Dendritic cell treated with granulocyte-macrophage colony-stimulating factor and Interleukin-4, amounts not matched to agents 40 ng/mL and 50 ng/mL, for 4 days (primary cell): ENCODE measurements at regions of chr12 and their contacts with region 1.

Region 1: GRCh38 chr12:26340649-26341048 is 145.3 kb downstream of the SSPN start:
- H3K4me3 Mint-ChIP-seq: no peak overlapping the region
- H3K27ac Mint-ChIP-seq: no peak overlapping the region
- H3K4me1 Mint-ChIP-seq: peaks cover 51% of the 10 kb centered on the region
- H3K27me3 Mint-ChIP-seq: peaks cover 38% of the 10 kb centered on the region

Region 2: GRCh38 chr12:26130728-26131127 is 209.9 kb before region 1 on chr12:
- intact Hi-C with region 1: loop called (anchors 5 kb)
- H3K4me3 Mint-ChIP-seq: no peak overlapping the region
- H3K27ac Mint-ChIP-seq: no peak overlapping the region
- H3K4me1 Mint-ChIP-seq: peaks cover 50% of the 10 kb centered on the region
- H3K27me3 Mint-ChIP-seq: peaks cover 73% of the 10 kb centered on the region

Region 3: DNA sequence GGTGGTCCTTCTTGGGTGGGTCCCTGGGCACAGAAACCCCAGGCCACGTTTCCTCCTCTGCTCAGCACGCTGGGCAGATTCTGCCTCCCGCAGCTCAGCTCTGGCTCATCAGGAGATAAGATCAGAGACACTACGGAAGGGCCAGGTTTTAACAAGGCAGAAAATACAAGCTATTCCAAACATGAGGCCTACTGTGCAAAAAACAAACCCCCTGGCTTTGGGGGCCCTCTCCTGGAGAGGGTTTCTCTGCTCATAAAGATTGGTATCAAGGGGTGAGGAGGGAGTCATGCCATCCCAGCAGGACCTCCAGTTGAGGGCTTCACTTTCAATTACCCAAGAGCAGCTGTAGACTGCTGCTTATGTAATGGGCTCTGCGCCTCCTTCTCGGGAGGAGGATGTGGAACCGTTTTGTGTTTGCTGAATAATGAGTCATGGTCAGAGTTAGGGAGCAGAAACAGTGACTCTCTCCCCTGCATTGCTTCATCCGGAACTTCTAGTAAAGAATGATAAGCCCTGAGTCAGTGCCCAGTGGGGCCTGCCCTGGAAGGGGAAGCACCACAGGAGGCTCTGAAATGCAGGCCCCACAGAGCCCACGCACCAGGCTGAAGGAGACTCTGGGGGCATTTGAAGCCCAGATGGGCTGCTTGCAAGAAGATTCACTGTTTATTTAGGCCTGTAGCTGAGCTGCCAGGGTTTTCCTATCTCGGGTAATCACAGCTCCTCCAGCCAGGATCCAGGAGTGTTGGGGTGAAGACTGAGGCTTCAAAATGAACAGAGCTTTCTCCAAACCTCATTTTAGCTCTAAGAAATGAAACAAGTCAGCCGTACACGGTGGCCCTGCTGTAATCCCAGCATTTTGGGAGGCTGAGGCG is 66.0 kb before region 1 on chr12:
- intact Hi-C with region 1: loop called (anchors 2 kb)
- H3K4me3 Mint-ChIP-seq: no peak overlapping the region
- H3K27ac Mint-ChIP-seq: peak overlapping the region; percentile 86
- H3K4me1 Mint-ChIP-seq: peaks cover 73% of the 10 kb centered on the region
- H3K27me3 Mint-ChIP-seq: peaks cover 39% of the 10 kb centered on the region

Region 4: DNA sequence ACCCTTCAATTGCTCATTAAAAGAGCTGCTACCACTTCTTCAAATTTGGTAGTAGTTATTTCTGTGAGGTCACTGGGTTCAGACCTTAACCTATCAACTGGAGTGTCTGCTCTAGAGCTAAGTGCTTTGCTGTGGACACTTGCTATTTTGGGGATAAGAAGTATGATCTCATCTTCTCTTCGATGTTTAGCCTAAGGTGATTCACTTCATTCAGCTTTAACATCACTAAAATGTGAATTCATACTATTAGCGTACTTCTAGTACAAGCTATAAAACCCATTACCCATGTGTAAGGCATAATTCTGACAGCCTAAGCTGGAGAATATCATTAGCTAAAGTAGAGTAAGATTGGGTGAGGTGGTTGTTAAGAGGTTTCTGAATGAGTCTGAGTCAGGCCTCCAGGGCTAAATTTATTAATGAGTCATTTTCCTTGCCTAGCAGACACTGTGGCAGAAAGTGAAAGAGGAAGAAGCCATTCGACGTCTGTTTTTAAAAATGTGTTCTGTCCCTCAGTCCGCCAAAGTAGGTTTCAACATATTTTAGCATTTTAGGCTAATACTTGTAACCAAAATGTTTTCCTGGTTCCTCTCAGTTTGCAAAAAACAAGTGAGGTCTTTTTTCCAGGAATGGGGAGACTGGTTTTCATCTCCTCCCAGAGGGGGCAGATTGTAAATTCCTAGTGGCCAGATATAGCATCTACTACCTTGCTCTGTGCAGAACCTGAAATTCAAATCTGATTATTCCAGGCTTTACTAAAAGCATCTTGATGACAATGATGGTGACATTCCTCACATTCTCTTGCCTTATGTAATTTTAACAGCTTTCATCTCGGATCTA is 41.6 kb before region 1 on chr12:
- intact Hi-C with region 1: no loop called
- H3K4me3 Mint-ChIP-seq: no peak overlapping the region
- H3K27ac Mint-ChIP-seq: peak overlapping the region; percentile 9
- H3K4me1 Mint-ChIP-seq: peaks cover 39% of the 10 kb centered on the region
- H3K27me3 Mint-ChIP-seq: peaks cover 21% of the 10 kb centered on the region

Region 5: GRCh38 chr12:26471560-26471959 is 130.9 kb after region 1 on chr12:
- intact Hi-C with region 1: loop called (anchors 5 kb)
- H3K4me3 Mint-ChIP-seq: no peak overlapping the region
- H3K27ac Mint-ChIP-seq: peak overlapping the region; percentile 69
- H3K4me1 Mint-ChIP-seq: peaks cover 55% of the 10 kb centered on the region
- H3K27me3 Mint-ChIP-seq: no peaks in the 10 kb centered on the region

Region 6: DNA sequence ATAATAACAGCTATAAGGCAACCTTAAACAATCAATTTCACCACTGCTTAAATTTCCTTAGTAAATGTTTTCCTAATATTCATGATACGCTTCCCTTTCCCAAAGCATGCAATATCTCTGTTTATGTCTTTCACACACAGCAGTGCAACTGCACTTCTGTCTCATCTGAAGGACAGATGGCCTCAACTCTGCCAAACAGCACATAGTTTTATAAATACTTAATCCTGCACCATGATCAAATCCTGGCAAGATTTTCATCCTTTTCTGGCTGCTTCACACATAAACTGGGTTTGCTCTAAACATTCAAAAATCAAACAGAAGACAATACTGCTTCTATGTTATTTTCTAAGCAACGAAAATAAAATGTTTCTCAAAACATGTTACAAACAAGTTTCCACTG is 226.0 kb after region 1 on chr12:
- intact Hi-C with region 1: no loop called
- H3K4me3 Mint-ChIP-seq: no peak overlapping the region
- H3K27ac Mint-ChIP-seq: no peak overlapping the region
- H3K4me1 Mint-ChIP-seq: no peaks in the 10 kb centered on the region
- H3K27me3 Mint-ChIP-seq: no peaks in the 10 kb centered on the region